Transverse colon (tissue), 4 donors: ENCODE measurements at regions of chr1 and their contacts with region 1.

Region 1: GRCh38 chr1:9957726-9958125 is 14.5 kb downstream of the NMNAT1 start:
- DNase-seq: no peak
- H3K4me3 ChIP-seq: no peak overlapping the region
- H3K27ac ChIP-seq: no peak overlapping the region
- H3K4me1 ChIP-seq: no peaks in the 10 kb centered on the region
- H3K27me3 ChIP-seq: no peaks in the 10 kb centered on the region
- CTCF ChIP-seq: no peak
- EP300 ChIP-seq: no peak
- POLR2A ChIP-seq: no peak

Region 2: DNA sequence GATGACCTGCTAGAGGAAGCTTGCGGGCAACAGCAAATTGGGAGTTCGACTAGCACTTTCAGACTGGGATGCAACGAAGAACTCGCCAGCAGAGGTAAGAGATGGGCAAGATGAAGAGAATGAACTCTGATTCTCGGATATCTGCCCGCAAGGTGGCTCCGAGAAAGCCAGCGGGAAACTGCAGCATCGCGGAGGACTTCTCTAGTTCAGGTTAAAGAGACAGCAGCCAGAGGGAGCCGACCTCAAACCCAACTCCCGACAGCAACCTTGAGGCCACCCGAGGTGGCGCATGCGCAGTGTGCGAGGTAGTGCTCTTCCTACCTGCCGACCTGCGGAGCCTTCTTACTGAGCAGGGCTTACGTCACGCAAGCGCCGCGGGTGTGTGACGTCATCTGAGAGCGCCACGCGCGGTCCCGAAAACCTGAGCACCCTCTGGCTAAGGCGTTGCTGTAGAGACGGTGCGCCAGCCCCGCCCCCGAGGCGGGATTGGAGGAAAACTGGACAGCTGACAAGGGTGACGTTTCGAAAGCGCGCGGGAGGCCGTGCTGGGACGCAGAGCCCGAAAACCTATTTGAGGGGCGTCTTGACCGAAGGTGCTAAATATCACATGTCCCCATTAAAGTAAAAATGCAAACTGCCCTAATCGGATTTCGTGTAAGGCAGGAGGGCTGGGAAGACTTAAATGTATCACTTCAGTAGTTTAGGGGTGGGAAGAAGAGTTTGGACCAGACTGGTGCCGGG is 529.0 kb before region 1 on chr1:
- in situ Hi-C with region 1: no loop called
- intact Hi-C with region 1: no loop called
- DNase-seq: peak; percentile 100
- H3K4me3 ChIP-seq: peak overlapping the region; percentile 38 to 58 (median 44)
- H3K27ac ChIP-seq: peak overlapping the region; percentile 80 to 88 (median 86)
- H3K4me1 ChIP-seq: peaks cover 0 to 20% (median 12%) of the 10 kb centered on the region in 4 donors
- H3K27me3 ChIP-seq: no peaks in the 10 kb centered on the region
- CTCF ChIP-seq: peak in 4 of 5 experiments; percentile 10 to 54 (median 31)
- EP300 ChIP-seq: no peak
- POLR2A ChIP-seq: peak; percentile 55

Region 3: DNA sequence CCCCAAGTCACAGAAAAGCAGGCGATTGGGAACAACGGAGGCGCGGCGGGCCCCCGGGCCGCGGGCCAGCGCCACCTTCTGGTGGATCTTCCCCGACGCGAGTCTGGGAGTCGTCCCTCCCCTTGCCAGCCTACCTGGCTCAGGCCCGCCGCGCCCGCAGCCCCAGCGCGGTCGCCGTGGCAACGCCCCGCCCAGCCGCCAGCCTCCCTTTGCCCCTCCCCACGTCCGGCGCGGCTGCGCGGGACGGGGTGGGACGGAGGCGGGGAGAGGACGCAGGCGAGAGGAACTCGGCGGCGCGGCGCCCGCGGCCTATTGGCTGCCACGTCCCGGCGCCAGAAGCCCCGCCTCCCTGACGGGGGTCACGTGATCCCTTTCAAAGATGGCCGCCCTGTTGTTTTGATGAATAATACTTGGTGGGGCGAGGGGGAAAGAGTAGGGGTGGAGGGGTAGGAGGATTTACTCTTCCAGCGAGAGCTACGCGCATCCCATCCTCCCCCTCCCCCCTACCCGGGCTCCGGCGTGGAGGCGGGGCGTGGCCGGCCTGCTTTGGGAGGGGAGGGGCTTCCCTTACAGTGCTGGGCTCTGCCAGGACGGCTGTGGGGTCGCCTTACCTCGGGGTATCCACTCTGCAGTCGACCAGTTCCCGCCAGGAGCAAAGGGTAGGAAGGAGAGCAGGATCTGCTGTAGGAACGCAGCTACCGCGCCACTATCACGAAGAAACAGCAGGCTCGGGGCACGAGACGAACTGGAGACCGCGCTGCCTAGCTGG is 75.0 kb after region 1 on chr1 and contains the start of gene UBE4B:
- in situ Hi-C with region 1: loop called in 1 of 4 experiments (anchors 10 kb)
- intact Hi-C with region 1: no loop called
- DNase-seq: peak; percentile 98
- H3K4me3 ChIP-seq: peak within 1 kb of the TSS; percentile 50 to 98 (median 79)
- H3K27ac ChIP-seq: peak within 1 kb of the TSS; percentile 95 to 98 (median 95)
- H3K4me1 ChIP-seq: peaks cover 4 to 31% (median 20%) of the 10 kb centered on the region in 4 donors
- H3K27me3 ChIP-seq: no peaks in the 10 kb centered on the region
- CTCF ChIP-seq: peak; percentile 80 to 89 (median 85)
- EP300 ChIP-seq: no peak
- POLR2A ChIP-seq: peak; percentile 66
- total RNA-seq, gene UBE4B: 35.1 to 145 (median 78.7) TPM